ENCODE measurements at regions of chr6 and their contacts with region 1.

Region 1: DNA sequence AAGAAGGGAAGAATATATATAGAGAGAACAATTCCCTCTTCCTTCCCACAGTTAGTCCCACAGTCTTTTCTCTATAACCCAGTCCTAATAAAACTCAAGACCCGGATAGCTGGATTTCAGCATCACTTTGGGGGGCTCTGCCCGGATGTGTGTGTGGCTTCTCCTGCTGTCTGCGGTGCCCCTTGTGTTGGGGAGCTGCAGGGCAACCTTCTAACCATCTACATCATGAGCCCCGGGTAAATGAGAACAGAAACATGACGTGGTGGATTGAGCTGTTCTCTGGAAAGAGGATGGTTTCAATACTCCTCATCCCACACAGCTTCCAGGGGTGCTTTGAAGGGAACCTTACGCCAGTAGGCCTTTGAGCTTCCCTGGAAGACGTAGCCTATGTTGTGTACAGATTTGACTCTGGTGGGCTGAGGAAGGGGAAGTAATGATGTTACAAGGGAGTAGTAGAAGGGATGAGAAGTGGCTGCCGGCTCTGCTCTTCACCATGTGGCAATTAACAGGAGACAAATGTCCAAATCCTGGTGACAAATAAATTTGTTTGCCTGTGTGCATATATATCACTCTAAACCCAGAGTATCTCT is 13.5 kb upstream of the PRDM1 start:
- DNase-seq: no peak
- ATAC-seq: no peak
- H3K4me3 ChIP-seq: no peak overlapping the region
- H3K27ac ChIP-seq: no peak overlapping the region
- H3K4me1 ChIP-seq: no peaks in the 10 kb centered on the region
- H3K27me3 ChIP-seq: no peaks in the 10 kb centered on the region
- CTCF ChIP-seq: no peak

Region 2: DNA sequence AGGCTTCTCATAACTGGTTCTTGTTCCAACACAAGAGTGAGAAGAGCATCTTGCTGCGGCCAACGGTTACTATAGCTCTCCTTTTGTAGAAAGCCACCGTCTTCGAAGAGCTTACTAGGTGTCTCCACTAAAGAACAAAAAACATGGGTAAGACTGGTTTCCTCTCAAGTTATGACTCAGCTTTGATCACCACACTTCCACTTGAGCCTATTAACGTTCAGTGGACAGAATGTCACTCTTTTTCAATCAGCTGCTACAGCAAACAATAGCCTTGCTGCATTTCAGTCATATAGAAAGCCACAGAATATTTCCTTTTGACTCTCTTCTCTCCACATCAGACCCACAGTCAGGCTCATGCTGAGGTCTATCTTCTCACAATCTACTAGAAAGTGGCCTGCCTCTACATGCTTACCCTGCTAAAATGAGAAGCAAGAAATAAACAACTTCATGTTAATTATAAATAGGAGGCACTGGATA is 426.2 kb before region 1 on chr6:
- CTCF ChIA-PET with region 1: no interaction called
- POLR2A ChIA-PET with region 1: no interaction called
- in situ Hi-C with region 1: no loop called
- intact Hi-C with region 1: no loop called
- DNase-seq: no peak
- ATAC-seq: no peak
- H3K4me3 ChIP-seq: no peak overlapping the region
- H3K27ac ChIP-seq: no peak overlapping the region
- H3K4me1 ChIP-seq: no peaks in the 10 kb centered on the region
- H3K27me3 ChIP-seq: no peaks in the 10 kb centered on the region
- CTCF ChIP-seq: no peak

Region 3: DNA sequence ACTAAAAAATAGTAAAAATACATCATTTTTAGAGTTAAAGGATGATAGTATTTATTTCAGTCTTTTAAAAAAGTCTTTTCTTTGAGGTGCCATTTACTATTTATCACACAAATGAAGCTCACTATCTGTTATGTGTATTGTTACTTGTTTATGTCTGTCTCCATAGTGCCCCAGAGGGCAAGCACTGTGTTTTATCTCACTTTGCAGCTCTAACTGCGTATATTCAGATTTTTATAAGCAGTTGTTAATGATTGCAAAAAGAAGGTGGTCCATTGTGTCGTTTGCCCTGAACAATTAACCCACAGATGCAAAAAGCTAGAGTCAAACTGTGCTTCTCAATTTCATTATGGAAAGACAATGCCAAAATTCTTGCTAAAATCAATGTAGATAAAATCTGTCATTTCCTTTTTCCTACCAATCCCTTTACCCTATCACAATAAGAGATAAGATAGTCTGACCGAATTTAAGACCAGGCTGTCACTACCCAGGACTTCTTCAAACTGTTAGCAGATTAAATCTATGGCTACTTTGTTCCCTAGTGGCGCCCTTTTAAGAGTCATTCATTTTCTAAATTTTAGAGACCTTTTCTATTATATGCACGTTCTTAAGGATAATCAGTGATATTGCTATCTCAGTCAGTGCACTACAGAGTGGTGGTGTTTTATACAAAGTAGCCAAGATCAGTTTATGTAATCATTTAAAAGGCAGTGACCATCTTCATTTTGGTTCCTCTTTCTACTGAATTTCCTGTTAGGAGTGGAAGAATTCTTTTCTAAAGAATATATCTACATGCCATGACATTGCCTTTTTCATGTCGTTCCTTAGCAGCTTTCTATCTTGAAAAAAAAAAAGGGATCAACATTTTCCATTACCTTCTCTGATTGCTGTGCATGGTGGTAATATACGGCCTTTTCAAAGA is 119.6 kb before region 1 on chr6:
- CTCF ChIA-PET with region 1: no interaction called
- POLR2A ChIA-PET with region 1: no interaction called
- in situ Hi-C with region 1: no loop called
- intact Hi-C with region 1: no loop called
- DNase-seq: no peak
- ATAC-seq: no peak
- H3K4me3 ChIP-seq: no peak overlapping the region
- H3K27ac ChIP-seq: no peak overlapping the region
- H3K4me1 ChIP-seq: no peaks in the 10 kb centered on the region
- H3K27me3 ChIP-seq: no peaks in the 10 kb centered on the region; the same call in 1 of the 2 replicates
- CTCF ChIP-seq: no peak

Region 4: GRCh38 chr6:106037060-106037459 is 35.5 kb before region 1 on chr6:
- CTCF ChIA-PET with region 1: no interaction called
- POLR2A ChIA-PET with region 1: no interaction called
- in situ Hi-C with region 1: no loop called
- intact Hi-C with region 1: no loop called
- DNase-seq: no peak
- ATAC-seq: no peak
- H3K4me3 ChIP-seq: no peak overlapping the region
- H3K27ac ChIP-seq: no peak overlapping the region
- H3K4me1 ChIP-seq: no peaks in the 10 kb centered on the region
- H3K27me3 ChIP-seq: no peaks in the 10 kb centered on the region
- CTCF ChIP-seq: no peak

Region 5: DNA sequence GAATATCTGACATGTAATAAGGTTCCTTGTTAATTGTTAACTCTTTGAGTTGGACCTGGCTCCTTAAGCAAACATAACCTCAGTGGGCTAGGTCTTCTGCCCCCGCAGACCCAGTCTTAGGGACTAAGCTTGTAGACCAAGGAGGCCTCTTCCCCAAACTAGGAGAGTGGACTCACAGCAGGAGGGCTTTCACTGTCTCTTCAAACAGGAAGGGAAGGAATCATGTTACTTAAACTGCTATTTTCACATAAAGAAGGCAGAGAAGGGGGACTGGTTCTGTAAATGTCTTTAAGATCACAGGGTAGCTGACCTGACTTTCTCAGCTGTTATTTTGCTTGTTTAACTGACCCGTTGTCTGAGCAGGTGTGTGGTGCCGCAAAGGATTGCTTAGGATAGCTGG is 21.4 kb before region 1 on chr6:
- CTCF ChIA-PET with region 1: no interaction called
- POLR2A ChIA-PET with region 1: interaction called, 18 read pairs
- in situ Hi-C with region 1: no loop called
- intact Hi-C with region 1: no loop called
- DNase-seq: no peak
- ATAC-seq: no peak
- H3K4me3 ChIP-seq: no peak overlapping the region
- H3K27ac ChIP-seq: no peak overlapping the region
- H3K4me1 ChIP-seq: no peaks in the 10 kb centered on the region
- H3K27me3 ChIP-seq: no peaks in the 10 kb centered on the region
- CTCF ChIP-seq: no peak

Region 6: DNA sequence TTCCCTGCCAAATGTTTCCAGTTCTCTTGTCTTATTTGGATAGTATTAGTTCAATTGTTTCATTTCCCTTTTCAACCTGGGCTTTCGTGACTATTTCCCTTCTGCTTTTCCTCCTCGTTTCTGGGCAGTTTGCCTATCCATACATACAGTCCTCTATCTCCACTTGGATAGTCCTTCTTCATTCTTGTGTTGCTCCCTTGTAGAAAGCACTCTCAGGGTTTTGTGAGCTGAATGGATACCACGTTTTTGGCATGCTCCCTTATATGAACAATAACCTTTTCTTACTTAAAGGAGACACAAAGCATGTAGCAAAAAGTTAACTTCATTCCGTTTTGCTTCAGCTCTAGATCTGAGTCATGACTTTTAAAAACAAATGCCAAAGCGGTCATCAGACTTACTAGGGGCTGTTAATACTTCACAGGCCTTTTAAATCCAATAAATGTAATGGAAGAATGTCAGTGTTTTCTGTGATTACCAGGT is 304.5 kb after region 1 on chr6:
- CTCF ChIA-PET with region 1: no interaction called
- POLR2A ChIA-PET with region 1: no interaction called
- in situ Hi-C with region 1: no loop called
- intact Hi-C with region 1: no loop called
- DNase-seq: no peak
- ATAC-seq: no peak
- H3K4me3 ChIP-seq: no peak overlapping the region
- H3K27ac ChIP-seq: no peak overlapping the region
- H3K4me1 ChIP-seq: no peaks in the 10 kb centered on the region
- H3K27me3 ChIP-seq: peaks cover 42% of the 10 kb centered on the region
- CTCF ChIP-seq: no peak

Measured in Panc1 (cell line).